AG04450 (cell line): ENCODE measurements at regions of chr17 and their contacts with region 1.

Region 1: GRCh38 chr17:13002766-13003451 is 14.9 kb downstream of the ELAC2 start:
- DNase-seq: peak; percentile 55
- H3K4me3 ChIP-seq: no peak overlapping the region
- H3K27ac ChIP-seq: no peak overlapping the region
- H3K27me3 ChIP-seq: no peaks in the 10 kb centered on the region
- CTCF ChIP-seq: peak; percentile 80

Region 2: DNA sequence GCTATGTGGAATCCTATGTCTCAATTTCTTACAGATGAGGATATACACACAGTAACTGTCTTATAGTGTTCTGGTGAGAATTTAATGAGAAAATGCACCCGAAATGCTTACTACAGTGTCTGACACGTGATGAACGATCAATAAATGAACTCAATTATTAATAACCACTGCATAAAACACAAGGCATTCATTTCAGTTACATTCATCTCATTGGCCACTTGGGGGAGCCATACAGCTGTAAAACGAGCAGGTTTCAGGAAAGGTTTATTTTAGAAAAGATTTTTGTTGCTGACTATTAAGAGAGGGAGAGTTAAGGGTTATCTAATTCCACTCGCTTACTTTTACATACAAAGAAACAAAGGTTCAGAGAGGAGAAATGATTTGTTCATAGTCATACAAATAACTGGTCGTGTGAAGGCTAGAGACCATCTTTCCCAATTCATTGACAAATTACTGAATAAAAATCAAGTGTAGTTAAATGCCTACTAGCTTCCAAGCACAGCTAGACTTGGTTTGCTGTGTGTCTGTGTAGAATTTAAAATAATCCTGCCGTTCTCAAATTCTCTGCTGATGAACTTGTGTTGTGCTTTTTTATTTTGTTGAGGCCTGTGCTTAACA is 822.2 kb before region 1 on chr17:
- CTCF ChIA-PET with region 1: interaction called, 28 read pairs
- POLR2A ChIA-PET with region 1: no interaction called
- DNase-seq: peak; percentile 53
- H3K4me3 ChIP-seq: no peak overlapping the region
- H3K27ac ChIP-seq: no peak overlapping the region
- H3K27me3 ChIP-seq: no peaks in the 10 kb centered on the region
- CTCF ChIP-seq: peak; percentile 72

Region 3: DNA sequence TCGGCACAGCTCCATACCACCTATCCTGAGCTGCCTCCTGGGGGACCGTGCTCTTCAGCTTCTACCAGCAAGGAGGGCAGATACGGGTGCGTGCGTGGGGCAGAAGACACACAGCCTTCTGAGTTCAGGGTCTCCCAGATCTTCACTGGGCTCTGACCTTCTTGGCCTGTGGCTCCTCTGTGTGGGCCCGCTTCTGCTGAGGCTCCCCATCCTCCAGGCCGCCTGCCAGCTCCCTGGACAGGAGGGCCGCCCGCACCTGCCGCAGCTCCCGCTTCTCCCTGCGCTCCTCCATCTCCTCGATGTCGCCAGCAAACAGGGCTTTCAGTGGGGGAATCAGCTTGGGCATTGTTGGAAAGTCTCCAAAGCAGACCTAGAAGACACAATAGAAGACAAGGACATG is 10.2 kb before region 1 on chr17:
- CTCF ChIA-PET with region 1: interaction called, 15 read pairs
- POLR2A ChIA-PET with region 1: no interaction called
- DNase-seq: no peak
- H3K4me3 ChIP-seq: no peak overlapping the region
- H3K27ac ChIP-seq: no peak overlapping the region
- H3K27me3 ChIP-seq: no peaks in the 10 kb centered on the region
- CTCF ChIP-seq: no peak

Region 4: DNA sequence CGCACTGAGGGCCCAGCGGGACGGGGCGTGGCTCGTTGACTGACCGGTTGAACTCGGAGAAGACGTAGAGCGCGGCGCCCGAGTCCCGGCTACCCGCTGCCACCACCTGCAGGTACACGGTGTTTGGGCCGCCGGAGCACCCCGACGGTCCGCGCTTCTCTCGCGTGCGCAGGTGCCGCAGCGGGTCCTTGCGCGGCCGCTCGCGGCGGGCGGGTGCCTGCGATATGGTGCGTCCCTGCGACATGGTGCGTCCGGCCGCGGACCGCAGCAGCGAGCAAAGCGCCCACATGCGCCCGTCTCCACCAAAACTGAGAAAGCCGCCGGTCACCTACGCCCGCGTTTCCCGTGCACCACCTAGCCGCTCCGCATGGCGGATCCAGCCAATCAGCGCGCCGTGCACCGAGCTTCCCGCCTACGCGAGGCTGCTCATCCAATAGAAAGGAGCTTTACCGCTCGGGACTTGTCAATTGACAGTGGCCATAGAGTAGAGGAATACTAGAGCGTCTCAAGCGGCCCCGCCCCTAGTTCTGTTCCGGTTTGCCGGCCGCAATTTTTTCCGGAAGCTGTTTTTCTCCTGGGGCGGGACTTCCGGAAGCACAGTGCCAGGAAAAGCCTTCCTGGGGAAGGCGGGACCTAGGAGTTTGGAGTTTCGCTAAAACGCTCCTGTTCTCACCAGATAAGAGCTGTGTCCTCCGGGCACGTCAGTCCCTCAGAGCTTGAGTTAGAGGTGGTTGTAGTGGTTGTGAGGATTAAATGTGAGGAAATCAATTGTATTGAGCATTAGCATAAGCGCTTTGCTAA is 14.9 kb after region 1 on chr17 and contains the start of gene ELAC2:
- CTCF ChIA-PET with region 1: interaction called, 43 read pairs
- POLR2A ChIA-PET with region 1: interaction called, 3 read pairs
- DNase-seq: peak; percentile 98
- H3K4me3 ChIP-seq: peak within 1 kb of the TSS; percentile 89
- H3K27ac ChIP-seq: peak within 1 kb of the TSS; percentile 69
- H3K27me3 ChIP-seq: no peaks in the 10 kb centered on the region
- CTCF ChIP-seq: no peak
- polyA plus RNA-seq, gene ELAC2: 41.0 and 42.5 TPM in 2 replicates

Region 5: DNA sequence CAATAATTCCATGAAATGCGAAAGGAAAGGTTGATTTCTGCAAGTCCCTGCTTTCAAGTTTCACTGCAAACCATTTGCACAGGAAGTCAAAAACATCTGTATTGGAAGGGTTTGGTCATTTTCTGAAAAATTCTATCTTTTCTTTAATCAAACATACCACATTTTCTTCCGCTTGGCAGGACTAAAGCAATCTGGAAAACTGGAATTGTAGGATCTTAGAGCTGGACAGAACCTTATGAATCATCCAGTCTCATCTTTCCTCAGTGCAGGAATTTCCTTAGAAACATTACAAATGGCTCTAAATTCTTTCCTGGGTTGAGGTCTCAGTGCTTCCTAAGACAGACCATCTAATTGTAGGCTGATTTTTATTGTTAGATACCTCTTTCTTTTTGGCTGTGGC is 126.4 kb after region 1 on chr17:
- CTCF ChIA-PET with region 1: no interaction called
- POLR2A ChIA-PET with region 1: no interaction called
- DNase-seq: no peak
- H3K4me3 ChIP-seq: no peak overlapping the region
- H3K27ac ChIP-seq: no peak overlapping the region
- H3K27me3 ChIP-seq: no peaks in the 10 kb centered on the region
- CTCF ChIP-seq: no peak